ENCODE measurements at regions of chr12 and their contacts with region 1.

Region 1: GRCh38 chr12:126588586-126589249 is 1523.5 kb downstream of the AACS start:
- DNase-seq: peak; percentile 19
- H3K4me3 Mint-ChIP-seq: peak overlapping the region; percentile 60
- H3K27ac Mint-ChIP-seq: peak overlapping the region; percentile 68
- H3K4me1 Mint-ChIP-seq: peaks cover 20% of the 10 kb centered on the region
- H3K27me3 Mint-ChIP-seq: no peaks in the 10 kb centered on the region

Region 2: GRCh38 chr12:126572170-126572569 is 16.5 kb before region 1 on chr12:
- intact Hi-C with region 1: loop called (anchors 2 kb)
- DNase-seq: no peak
- H3K4me3 Mint-ChIP-seq: no peak overlapping the region
- H3K27ac Mint-ChIP-seq: no peak overlapping the region
- H3K4me1 Mint-ChIP-seq: peaks cover 13% of the 10 kb centered on the region
- H3K27me3 Mint-ChIP-seq: peaks cover 4% of the 10 kb centered on the region

Region 3: GRCh38 chr12:126761420-126761819 is 172.7 kb after region 1 on chr12:
- intact Hi-C with region 1: loop called (anchors 1 kb)
- DNase-seq: no peak
- H3K4me3 Mint-ChIP-seq: no peak overlapping the region
- H3K27ac Mint-ChIP-seq: peak overlapping the region; percentile 21
- H3K4me1 Mint-ChIP-seq: peaks cover 8% of the 10 kb centered on the region
- H3K27me3 Mint-ChIP-seq: no peaks in the 10 kb centered on the region

Region 4: DNA sequence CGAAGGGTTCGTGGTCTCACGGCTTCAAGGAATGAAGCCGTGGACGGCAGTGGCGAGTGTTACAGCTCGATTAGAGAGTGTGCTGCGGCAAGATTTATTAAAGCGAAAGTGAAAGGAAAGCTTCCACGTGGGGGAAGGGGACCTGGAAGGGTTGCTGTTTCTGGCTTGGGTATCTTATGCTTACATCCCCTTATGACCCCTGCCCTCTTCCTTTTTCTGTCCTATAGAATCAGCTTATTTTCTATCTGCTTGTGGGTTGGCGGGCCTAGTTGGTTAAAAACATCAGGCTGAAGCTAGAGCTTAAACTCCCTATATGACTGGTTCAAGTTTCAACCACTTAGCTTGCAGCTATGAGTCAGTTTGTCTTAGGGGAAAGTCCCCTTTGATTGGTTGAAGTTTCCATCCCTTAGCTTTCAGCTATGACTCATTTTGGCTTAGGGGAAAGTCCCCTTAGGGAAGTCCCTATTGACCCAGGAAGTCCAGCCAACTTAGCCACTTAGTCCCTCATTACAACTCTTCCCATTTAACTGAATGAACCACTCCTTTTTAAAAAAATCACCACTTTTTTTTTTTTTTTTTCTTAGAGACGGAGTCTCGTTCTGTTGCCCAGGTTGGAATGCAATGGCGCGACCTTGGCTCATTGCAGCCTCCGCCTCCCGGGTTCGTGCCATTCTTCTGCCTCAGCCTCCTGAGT is 183.6 kb after region 1 on chr12:
- intact Hi-C with region 1: loop called (anchors 1 kb)
- DNase-seq: peak; percentile 16
- H3K4me3 Mint-ChIP-seq: peak overlapping the region; percentile 77
- H3K27ac Mint-ChIP-seq: peak overlapping the region; percentile 97
- H3K4me1 Mint-ChIP-seq: peaks cover 17% of the 10 kb centered on the region
- H3K27me3 Mint-ChIP-seq: no peaks in the 10 kb centered on the region

Measured in activated T-helper 2 cell treated with anti-CD3 and anti-CD28 coated beads, Interferon-gamma antibody, Interleukin-2, Interleukin-4, amounts not matched to agents 10 μg/mL and 5 μg/mL and 100 μg/mL, durations not matched to agents 14 hours and 24 hours and 36 hours (primary cell).